GM13977 (cell line): ENCODE measurements at regions of chr22 and their contacts with region 1.

Region 1: DNA sequence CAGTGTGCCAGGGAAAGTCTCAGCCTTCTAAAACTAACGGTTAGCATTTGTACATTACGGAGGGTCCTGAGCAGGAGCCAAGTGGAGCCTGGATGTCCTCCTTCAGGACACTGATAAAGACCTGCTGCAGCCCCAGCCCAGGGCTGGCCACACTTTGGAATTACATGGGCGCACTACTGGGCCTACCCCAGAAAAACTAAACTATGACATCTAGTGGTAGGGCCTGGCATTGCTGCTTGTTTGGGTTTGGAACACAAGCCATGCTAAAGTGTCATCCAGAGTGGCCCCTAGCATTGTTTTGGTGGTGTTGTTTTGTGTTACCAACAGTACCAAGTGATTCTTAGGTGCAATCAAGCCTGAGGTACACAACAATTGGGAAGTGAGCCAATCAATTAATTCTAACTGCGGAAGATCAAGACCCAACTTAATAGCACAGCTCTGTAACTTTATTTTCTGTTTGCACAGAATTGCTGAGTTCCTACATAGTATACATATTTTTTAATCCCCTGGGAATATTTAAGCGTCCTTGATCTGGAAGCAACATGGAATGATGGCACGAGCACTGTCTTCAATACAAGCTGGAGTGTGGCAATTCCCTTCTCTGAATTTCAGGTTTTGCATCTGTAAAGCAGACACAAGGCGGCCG is 340.7 kb downstream of the LARGE1 start:
- DNase-seq: peak; percentile 52
- CTCF ChIP-seq: peak; percentile 92

Region 2: GRCh38 chr22:33302049-33302545 is 277.5 kb before region 1 on chr22:
- in situ Hi-C with region 1: loop called (anchors 10 kb)
- DNase-seq: peak; percentile 71
- CTCF ChIP-seq: peak; percentile 99

Region 3: GRCh38 chr22:33519071-33519973 is 60.2 kb before region 1 on chr22:
- in situ Hi-C with region 1: loop called (anchors 5 kb)
- DNase-seq: peak; percentile 65
- CTCF ChIP-seq: peak; percentile 61

Region 4: DNA sequence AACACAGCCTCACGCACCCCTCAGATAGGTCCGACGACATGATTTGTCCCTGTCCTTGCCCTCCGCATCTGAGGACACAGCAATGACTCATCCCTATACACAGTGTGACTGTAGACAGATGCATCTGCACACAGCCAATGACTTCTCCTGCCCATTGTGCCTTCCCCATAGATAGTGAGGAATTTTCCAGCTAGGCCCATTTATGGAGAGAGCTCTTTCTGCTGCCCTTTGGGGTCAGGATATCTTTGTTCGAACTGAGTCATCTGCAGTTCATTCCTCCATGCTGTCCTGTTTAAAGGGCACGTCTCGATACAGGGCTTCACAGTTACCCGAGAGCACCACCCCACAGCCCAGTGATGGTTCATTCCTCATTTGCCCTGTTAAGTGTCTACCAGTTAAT is 244.0 kb after region 1 on chr22:
- in situ Hi-C with region 1: no loop called
- DNase-seq: no peak
- CTCF ChIP-seq: no peak